H1 (cell line): ENCODE measurements at regions of chr2 and their contacts with region 1.

Region 1: DNA sequence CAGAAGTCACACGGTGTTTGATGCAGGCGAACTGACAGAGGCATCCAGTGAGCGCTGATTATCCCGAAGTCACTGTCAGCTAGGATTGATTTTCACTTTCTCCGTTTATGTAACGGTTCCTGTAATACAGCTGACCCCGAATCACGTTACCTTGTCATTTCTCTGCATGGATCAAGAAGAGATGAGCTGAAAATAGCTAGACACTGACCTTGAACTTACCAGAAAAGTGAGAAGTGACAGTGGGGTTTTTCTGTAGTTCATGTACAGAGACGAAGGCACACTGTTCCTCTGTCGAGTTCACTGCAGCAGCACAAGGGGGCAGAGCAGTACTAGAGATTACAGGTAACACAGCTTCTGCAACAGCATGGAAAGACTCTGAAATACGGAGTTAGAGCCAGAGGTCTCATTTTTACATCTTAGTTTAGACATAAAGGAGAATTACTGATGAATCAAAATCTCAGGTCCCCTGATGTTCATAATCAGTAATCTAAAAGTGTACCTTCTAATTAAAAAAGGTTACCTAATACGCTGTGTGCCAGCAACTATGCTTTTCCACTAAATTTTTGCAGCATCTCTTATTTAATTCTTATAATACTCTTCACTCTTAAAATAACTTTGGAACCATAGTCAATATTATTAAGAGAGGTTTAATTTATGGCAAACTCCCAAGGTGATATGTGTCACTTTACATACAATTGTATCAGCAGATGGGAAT is 33.1 kb downstream of the ARHGAP15 start:
- DNase-seq: no peak
- H3K4me3 ChIP-seq: no peak overlapping the region
- H3K27ac ChIP-seq: no peak overlapping the region
- H3K4me1 ChIP-seq: no peaks in the 10 kb centered on the region
- H3K27me3 ChIP-seq: no peaks in the 10 kb centered on the region
- CTCF ChIP-seq: peak; percentile 63 to 86 (median 83)
- EP300 ChIP-seq: no peak
- POLR2A ChIP-seq: no peak
- RAD21 ChIP-seq: peak; percentile 92 to 93

Region 2: GRCh38 chr2:143110758-143111428 is 51.4 kb before region 1 on chr2:
- CTCF ChIA-PET with region 1: interaction called, 45 read pairs
- POLR2A ChIA-PET with region 1: no interaction called
- DNase-seq: peak; percentile 34 to 66
- H3K4me3 ChIP-seq: no peak overlapping the region
- H3K27ac ChIP-seq: no peak overlapping the region
- H3K4me1 ChIP-seq: no peaks in the 10 kb centered on the region
- H3K27me3 ChIP-seq: no peaks in the 10 kb centered on the region
- CTCF ChIP-seq: peak; percentile 26 to 77 (median 76)
- EP300 ChIP-seq: no peak
- POLR2A ChIP-seq: no peak
- RAD21 ChIP-seq: peak; percentile 85 to 88

Region 3: DNA sequence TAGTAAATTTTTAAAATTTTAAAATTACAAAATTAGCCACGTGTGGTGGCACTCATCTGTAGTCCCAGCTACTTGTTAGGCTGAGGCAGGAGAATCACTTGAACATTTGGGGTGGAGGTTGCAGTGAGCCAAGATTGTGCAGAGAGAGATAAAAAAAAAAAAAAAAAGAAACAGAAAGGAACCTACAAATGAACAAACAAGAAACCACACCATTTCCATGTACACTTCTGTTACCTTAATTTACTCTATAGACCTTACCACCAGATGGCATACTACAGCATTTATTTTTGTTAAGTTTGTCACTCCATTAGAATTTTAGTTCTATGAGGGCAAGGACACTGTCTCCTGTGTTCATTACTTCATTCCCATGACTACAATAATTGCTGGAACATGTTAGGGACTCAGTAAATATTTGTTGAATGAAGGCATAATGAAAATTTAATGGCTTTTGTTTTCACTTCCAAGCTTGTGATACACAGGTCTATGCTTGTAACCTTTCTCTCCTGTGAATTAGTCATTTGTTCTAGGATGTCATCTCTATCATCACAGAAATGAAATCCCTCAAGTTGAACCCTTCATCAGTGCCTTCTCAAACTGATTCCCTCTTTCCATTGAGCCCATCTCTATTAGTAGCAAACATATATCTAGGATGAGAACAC is 43.0 kb after region 1 on chr2:
- CTCF ChIA-PET with region 1: interaction called, 21 read pairs
- POLR2A ChIA-PET with region 1: no interaction called
- DNase-seq: no peak
- H3K4me3 ChIP-seq: no peak overlapping the region
- H3K27ac ChIP-seq: no peak overlapping the region
- H3K4me1 ChIP-seq: no peaks in the 10 kb centered on the region
- H3K27me3 ChIP-seq: no peaks in the 10 kb centered on the region
- CTCF ChIP-seq: peak in 2 of 3 experiments; percentile 19 to 36; a peak in 2 of 4 replicates
- EP300 ChIP-seq: no peak
- POLR2A ChIP-seq: no peak
- RAD21 ChIP-seq: peak in 1 of 2 experiments; percentile 31

Region 4: DNA sequence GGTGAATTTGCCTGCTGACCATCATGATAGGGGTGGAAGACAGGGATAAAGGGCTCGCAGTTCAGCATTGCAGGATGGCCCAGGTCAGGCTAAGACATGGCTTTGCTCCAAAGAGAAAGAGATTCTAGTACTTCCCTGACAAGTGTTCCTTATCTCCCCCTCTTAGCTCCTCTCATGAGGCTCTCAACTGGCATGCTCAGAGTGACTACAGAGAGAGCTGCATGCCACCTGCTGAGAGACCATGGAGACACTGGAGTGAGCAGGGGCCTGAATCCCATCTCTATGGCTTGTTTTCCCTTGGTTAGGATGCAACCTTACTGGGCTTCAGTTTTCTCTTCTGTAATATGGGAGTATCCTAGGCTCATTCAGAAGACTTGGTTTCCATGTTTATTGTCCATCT is 61.3 kb after region 1 on chr2:
- CTCF ChIA-PET with region 1: interaction called, 14 read pairs
- POLR2A ChIA-PET with region 1: no interaction called
- DNase-seq: no peak
- H3K4me3 ChIP-seq: no peak overlapping the region
- H3K27ac ChIP-seq: no peak overlapping the region
- H3K4me1 ChIP-seq: no peaks in the 10 kb centered on the region
- H3K27me3 ChIP-seq: no peaks in the 10 kb centered on the region
- CTCF ChIP-seq: no peak
- EP300 ChIP-seq: no peak
- POLR2A ChIP-seq: no peak
- RAD21 ChIP-seq: no peak

Region 5: GRCh38 chr2:143259368-143259958 is 97.2 kb after region 1 on chr2:
- CTCF ChIA-PET with region 1: interaction called, 164 read pairs
- POLR2A ChIA-PET with region 1: interaction called, 4 read pairs
- DNase-seq: peak; percentile 39 to 61
- H3K4me3 ChIP-seq: no peak overlapping the region
- H3K27ac ChIP-seq: no peak overlapping the region
- H3K4me1 ChIP-seq: peaks cover 0 to 4% (median 0%) of the 10 kb centered on the region in 4 experiments; a peak in 1 of 7 replicates
- H3K27me3 ChIP-seq: peaks cover 0 to 1% (median 0%) of the 10 kb centered on the region in 4 experiments; a peak in 1 of 7 replicates
- CTCF ChIP-seq: peak in 2 of 3 experiments; percentile 65 to 76; a peak in 3 of 4 replicates
- EP300 ChIP-seq: no peak
- POLR2A ChIP-seq: no peak
- RAD21 ChIP-seq: peak; percentile 83 to 88